ENCODE measurements at regions of chr3 and their contacts with region 1.

Region 1: DNA sequence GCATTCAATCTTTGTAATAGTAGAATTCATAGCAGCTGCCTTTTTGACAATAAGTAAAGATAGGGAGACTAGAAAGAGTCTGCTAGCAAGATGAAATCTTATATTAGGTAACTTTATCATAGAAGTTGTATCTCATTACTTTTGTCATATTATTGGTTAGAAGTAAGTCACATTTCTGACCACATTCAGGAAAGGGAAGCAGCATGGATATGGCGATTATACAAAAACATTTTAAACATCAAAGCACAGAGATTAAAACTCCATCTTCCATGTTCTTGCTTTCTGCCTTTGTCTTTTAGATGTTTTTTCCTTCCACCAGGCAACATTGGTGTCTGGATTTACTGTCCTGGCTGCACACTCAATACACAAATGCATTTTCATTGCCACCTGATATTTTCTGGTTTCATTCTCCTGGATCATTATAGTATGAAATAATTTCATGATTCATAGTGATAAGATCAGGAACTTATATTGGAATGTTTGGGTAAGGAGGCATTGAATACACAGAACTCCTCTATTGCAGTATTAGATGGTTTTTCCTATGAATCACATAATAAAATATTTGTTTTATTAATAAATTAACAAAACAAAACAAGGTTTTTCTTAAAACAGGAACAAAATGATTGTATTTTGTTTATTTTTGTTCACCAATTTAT is 1460.3 kb upstream of the CADM2 start:
- DNase-seq: peak; percentile 81
- ATAC-seq: peak; percentile 93
- H3K4me3 ChIP-seq: no peak overlapping the region
- H3K27ac ChIP-seq: peak overlapping the region; percentile 67
- H3K4me1 ChIP-seq: peaks cover 56% of the 10 kb centered on the region
- H3K27me3 ChIP-seq: no peaks in the 10 kb centered on the region
- CTCF ChIP-seq: no peak

Region 2: GRCh38 chr3:83434880-83435587 is 63.5 kb before region 1 on chr3:
- CTCF ChIA-PET with region 1: no interaction called
- POLR2A ChIA-PET with region 1: no interaction called
- intact Hi-C with region 1: loop called (anchors 5 kb)
- DNase-seq: no peak
- ATAC-seq: peak; percentile 38
- H3K4me3 ChIP-seq: no peak overlapping the region
- H3K27ac ChIP-seq: no peak overlapping the region
- H3K4me1 ChIP-seq: peaks cover 19% of the 10 kb centered on the region
- H3K27me3 ChIP-seq: no peaks in the 10 kb centered on the region
- CTCF ChIP-seq: no peak